Posterior cingulate gyrus (tissue), 11 donors: ENCODE measurements at regions of chrX and their contacts with region 1.

Region 1: DNA sequence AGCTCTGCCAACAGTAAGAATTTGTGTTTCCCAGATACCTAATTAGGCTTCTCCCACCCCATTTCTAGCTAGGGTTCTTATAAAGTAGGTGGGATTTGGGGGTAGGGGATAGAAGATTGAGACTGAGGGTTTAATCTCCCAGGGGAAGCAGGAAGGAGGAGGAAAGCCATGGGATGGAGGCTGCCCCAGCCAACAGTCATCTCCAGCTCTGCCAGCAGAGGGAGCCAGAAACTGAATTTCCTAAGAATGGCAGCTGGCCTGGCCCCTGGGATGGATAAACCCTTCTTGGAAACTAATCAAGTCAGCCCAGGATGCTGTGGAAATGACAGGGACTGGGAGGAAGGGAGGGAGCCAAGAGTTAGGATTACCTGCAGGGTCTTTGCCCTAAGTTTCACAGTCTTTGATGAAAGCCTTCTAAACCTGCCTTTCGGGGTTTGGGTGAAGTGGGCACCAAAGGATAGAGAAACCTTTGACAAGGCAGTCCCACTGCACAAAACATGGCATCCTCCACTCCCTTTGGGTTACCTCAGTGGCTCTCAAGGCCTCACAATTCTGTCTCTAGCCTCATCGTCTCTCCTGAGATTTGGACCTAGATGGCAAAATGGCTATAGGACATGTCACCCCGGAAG is 6.7 kb upstream of the ERCC6L start:
- DNase-seq: peak in 6 of 10 donors; percentile 41 to 85 (median 48)

Region 2: GRCh38 chrX:72540318-72540717 is 294.7 kb after region 1 on chrX:
- intact Hi-C with region 1: loop called (anchors 10 kb)
- DNase-seq: no peak